ENCODE measurements at regions of chr9 and their contacts with region 1.

Region 1: GRCh38 chr9:96667361-96667728 is 12.2 kb upstream of the PRXL2C start:
- DNase-seq: no peak
- ATAC-seq: no peak
- H3K4me3 ChIP-seq: no peak overlapping the region
- H3K4me3 Mint-ChIP-seq: no peak overlapping the region
- H3K27ac ChIP-seq: no peak overlapping the region
- H3K27ac Mint-ChIP-seq: no peak overlapping the region
- H3K4me1 ChIP-seq: no peaks in the 10 kb centered on the region
- H3K4me1 Mint-ChIP-seq: no peaks in the 10 kb centered on the region
- H3K27me3 ChIP-seq: no peaks in the 10 kb centered on the region
- H3K27me3 Mint-ChIP-seq: peaks cover 23% of the 10 kb centered on the region
- CTCF ChIP-seq: no peak

Region 2: GRCh38 chr9:96587338-96588315 is 79.7 kb before region 1 on chr9:
- CTCF ChIA-PET with region 1: no interaction called
- POLR2A ChIA-PET with region 1: no interaction called
- intact Hi-C with region 1: loop called in 1 of 2 experiments (anchors 2 kb)
- DNase-seq: peak in 1 of 9 experiments; percentile 25
- ATAC-seq: peak; percentile 17
- H3K4me3 ChIP-seq: no peak overlapping the region
- H3K4me3 Mint-ChIP-seq: no peak overlapping the region
- H3K27ac ChIP-seq: no peak overlapping the region
- H3K27ac Mint-ChIP-seq: no peak overlapping the region
- H3K4me1 ChIP-seq: peaks cover 13% of the 10 kb centered on the region
- H3K4me1 Mint-ChIP-seq: peaks cover 12% of the 10 kb centered on the region
- H3K27me3 ChIP-seq: peaks cover 0 to 6% of the 10 kb centered on the region in 2 experiments
- H3K27me3 Mint-ChIP-seq: peaks cover 32% of the 10 kb centered on the region
- CTCF ChIP-seq: no peak

Region 3: DNA sequence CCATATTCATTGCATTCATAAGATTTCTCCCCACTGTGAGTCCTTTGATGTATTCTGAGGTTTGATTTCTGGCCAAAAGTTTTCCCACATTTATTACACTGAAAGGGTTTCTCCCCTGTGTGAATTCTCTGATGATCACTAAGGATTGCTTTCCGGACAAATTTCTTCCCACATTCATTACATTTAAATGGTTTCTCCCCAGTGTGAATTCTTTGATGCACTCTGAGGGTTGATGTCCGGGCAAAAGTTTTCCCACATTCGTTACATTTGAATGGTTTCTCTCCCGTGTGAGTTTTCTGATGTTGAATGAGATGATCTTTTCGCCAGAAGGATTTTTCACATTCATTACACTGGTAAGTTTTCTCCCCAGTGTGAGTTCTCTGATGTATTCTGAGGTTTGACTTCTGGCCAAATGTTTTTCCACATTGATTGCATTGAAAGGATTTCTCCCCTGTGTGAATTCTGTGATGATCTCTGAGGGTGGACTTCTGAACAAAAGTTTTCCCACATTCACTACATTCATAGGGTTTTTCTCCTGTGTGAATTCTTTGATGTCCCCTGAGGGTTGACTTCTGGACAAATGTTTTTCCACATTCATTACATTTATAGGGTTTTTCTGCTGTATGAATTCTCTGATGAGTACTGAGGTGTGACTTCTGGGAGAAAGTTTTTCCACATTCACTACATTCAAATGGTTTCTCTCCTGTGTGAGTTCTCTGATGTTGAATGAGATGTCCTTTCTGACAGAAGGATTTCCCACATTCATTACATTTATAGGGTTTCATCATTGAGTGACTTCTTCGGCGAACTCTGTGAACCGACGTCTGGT is 91.7 kb after region 1 on chr9:
- CTCF ChIA-PET with region 1: no interaction called
- POLR2A ChIA-PET with region 1: no interaction called
- intact Hi-C with region 1: no loop called
- DNase-seq: no peak
- ATAC-seq: no peak
- H3K4me3 ChIP-seq: no peak overlapping the region
- H3K4me3 Mint-ChIP-seq: no peak overlapping the region
- H3K27ac ChIP-seq: no peak overlapping the region
- H3K27ac Mint-ChIP-seq: no peak overlapping the region
- H3K4me1 ChIP-seq: no peaks in the 10 kb centered on the region
- H3K4me1 Mint-ChIP-seq: no peaks in the 10 kb centered on the region
- H3K27me3 ChIP-seq: no peaks in the 10 kb centered on the region
- H3K27me3 Mint-ChIP-seq: no peaks in the 10 kb centered on the region
- CTCF ChIP-seq: no peak